Stomach (tissue), 19 donors: ENCODE measurements at regions of chr12 and their contacts with region 1.

Region 1: GRCh38 chr12:89363084-89363483 is 10.8 kb upstream of the DUSP6 start:
- DNase-seq: no peak
- H3K4me3 ChIP-seq: no peak overlapping the region
- H3K27ac ChIP-seq: no peak overlapping the region
- H3K4me1 ChIP-seq: peaks cover 0 to 8% (median 0%) of the 10 kb centered on the region in 4 donors
- H3K27me3 ChIP-seq: no peaks in the 10 kb centered on the region
- CTCF ChIP-seq: no peak
- EP300 ChIP-seq: no peak
- POLR2A ChIP-seq: no peak

Region 2: GRCh38 chr12:89345830-89346740 is 17.0 kb before region 1 on chr12:
- intact Hi-C with region 1: no loop called
- DNase-seq: peak; percentile 34 to 91
- H3K4me3 ChIP-seq: peak overlapping the region in 1 of 4 donors; percentile 17
- H3K27ac ChIP-seq: peak overlapping the region; percentile 34 to 97 (median 58)
- H3K4me1 ChIP-seq: peaks cover 23 to 64% (median 38%) of the 10 kb centered on the region in 4 donors
- H3K27me3 ChIP-seq: no peaks in the 10 kb centered on the region
- CTCF ChIP-seq: no peak
- EP300 ChIP-seq: no peak
- POLR2A ChIP-seq: no peak

Region 3: DNA sequence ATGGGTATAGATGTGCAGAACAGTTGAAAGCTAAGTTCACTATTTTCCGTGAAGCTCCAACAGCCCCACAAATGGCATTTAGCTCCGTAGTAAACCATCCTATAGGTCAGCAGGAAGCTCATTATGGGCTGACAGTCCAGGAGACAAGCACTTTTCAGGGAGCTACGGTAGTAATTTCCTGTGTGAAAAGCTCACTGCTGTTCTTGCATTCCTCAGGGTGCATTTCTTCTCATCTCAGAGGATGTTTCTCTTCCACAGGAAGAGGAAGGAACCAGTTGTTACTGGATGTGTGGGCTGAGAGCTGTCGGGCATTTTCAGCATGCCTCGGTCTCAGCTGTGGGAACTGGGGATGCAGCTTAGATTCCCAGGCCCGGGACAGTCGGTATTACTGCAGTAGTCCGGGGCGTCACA is 88.8 kb after region 1 on chr12:
- intact Hi-C with region 1: loop called (anchors 10 kb)
- DNase-seq: peak in 1 of 2 donors; percentile 54
- H3K4me3 ChIP-seq: no peak overlapping the region
- H3K27ac ChIP-seq: peak overlapping the region in 4 of 5 donors; percentile 64 to 77 (median 75)
- H3K4me1 ChIP-seq: peaks cover 0 to 41% (median 23%) of the 10 kb centered on the region in 4 donors
- H3K27me3 ChIP-seq: no peaks in the 10 kb centered on the region
- CTCF ChIP-seq: no peak
- EP300 ChIP-seq: no peak
- POLR2A ChIP-seq: no peak